ENCODE measurements at regions of chr22 and their contacts with region 1.

Region 1: GRCh38 chr22:35627264-35628041 is 10.3 kb upstream of the MB start:
- H3K4me3 Mint-ChIP-seq: peak overlapping the region; percentile 81
- H3K27ac Mint-ChIP-seq: peak overlapping the region; percentile 75
- H3K4me1 Mint-ChIP-seq: peaks cover 47% of the 10 kb centered on the region
- H3K27me3 Mint-ChIP-seq: peaks cover 24% of the 10 kb centered on the region

Region 2: DNA sequence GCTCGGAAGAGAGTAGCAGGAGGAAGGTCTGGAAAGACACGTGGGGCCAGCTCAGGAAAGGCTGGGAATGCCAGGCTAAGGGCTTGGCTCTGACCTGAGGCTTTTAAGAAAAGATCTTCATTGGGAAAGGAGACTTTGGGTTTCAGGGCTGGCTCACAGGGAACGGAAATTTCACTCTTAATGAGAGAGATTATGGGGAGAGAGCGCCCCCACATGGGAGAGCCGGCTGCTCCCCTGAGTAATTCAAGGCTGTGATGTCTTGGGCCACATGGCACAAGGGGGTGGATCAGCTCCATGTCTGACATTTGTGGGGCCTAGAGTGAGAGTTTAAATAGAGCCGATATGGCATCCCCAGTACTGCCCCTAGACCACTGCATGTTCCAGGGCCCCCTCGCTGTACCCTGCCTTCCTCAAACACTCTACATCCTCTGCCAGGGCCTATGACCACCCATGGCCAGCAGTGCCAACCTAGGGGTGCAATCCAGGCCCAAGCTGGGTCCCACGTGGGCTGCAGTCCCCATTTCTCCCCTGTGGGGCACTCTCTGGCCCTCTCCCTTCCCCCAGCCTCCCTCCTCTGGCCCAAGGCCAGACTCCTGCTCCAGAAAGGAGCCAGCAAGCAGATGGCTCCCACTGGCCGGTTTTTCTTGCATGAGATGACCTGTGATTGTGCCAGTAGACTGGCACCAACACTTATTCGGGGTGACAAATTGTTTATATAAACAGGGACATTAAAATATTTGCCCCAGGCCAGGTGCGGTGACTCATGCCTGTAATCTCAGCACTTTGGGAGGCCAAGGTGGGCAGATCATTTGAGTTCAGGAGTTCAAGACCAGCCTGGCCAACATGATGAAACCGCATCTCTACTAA is 486.3 kb before region 1 on chr22:
- intact Hi-C with region 1: no loop called
- H3K4me3 Mint-ChIP-seq: no peak overlapping the region
- H3K27ac Mint-ChIP-seq: no peak overlapping the region
- H3K4me1 Mint-ChIP-seq: no peaks in the 10 kb centered on the region
- H3K27me3 Mint-ChIP-seq: peaks cover 4% of the 10 kb centered on the region

Region 3: GRCh38 chr22:35430897-35431322 is 196.5 kb before region 1 on chr22:
- intact Hi-C with region 1: loop called (anchors 1 kb)
- H3K4me3 Mint-ChIP-seq: no peak overlapping the region
- H3K27ac Mint-ChIP-seq: no peak overlapping the region
- H3K4me1 Mint-ChIP-seq: no peaks in the 10 kb centered on the region
- H3K27me3 Mint-ChIP-seq: no peaks in the 10 kb centered on the region

Region 4: GRCh38 chr22:35840302-35840739 is 212.9 kb after region 1 on chr22:
- intact Hi-C with region 1: loop called (anchors 10 kb)
- H3K4me3 Mint-ChIP-seq: no peak overlapping the region
- H3K27ac Mint-ChIP-seq: no peak overlapping the region
- H3K4me1 Mint-ChIP-seq: peaks cover 31% of the 10 kb centered on the region
- H3K27me3 Mint-ChIP-seq: peaks cover 9% of the 10 kb centered on the region

Region 5: DNA sequence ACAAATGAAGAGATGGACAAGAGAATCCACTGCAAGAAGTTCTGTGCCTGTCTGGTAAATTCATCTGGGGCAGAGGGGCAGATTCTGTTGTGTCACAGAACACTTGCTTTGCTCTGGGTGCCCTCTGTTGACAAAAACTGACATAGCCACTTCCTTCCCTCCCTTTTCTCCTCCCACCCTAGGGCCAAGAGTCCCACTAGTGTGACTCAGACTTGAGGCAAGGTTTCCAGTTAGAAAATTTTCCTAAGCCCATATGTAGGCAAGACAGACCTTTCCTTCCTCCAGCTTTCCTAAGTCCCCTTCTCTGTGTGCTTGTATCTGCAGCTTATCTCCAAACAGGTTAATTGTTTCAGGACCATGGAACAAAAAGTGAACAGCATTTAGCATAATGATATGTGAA is 294.3 kb after region 1 on chr22:
- intact Hi-C with region 1: loop called (anchors 2 kb)
- H3K4me3 Mint-ChIP-seq: no peak overlapping the region
- H3K27ac Mint-ChIP-seq: no peak overlapping the region
- H3K4me1 Mint-ChIP-seq: no peaks in the 10 kb centered on the region
- H3K27me3 Mint-ChIP-seq: no peaks in the 10 kb centered on the region

Region 6: DNA sequence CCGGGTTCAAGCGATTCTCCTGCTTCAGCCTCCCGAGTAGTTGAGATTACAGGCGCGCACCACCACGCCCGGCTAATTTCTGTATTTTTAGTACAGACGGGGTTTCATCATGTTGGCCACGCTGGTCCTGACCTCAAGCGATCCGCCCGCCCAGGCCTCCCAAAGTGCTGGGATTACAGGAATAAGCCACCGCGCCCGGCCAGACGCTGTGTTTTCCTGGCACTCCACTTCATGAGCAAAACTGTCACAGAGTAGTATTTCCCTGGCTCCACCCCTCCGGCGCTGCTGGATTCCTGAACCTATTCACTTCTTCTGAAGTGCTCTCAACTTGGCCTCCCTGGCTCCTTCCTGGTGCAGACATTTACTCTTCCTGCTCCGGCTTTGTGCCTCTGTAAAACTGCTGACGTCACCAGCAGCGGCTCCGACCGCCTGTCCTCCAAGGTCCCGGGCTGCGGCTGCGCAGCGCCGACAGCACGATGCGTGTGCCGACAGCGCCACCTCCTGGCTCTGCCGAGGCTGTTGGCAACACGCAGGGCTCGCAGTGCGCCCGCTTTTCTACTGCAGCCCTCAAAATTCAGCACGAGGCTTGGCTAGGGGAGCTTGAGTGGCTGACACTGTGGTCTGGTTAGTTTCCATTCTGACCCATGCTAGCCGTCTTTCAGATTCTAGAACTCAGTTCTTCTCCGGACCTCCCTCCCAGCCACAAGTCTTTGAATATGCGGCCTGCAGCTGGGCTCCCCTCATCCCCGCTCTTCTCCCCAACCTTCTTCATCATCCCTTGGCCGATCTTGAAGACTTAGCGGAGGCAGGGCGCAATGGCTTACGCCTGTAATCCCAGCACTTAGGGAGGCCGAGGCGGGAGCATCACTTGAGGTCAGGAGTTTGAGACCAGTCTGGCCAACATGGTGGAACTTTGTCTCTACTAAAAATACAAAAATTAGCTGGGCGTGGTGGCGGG is 496.5 kb after region 1 on chr22:
- intact Hi-C with region 1: loop called (anchors 10 kb)
- H3K4me3 Mint-ChIP-seq: peak overlapping the region; percentile 27
- H3K27ac Mint-ChIP-seq: peak overlapping the region; percentile 84
- H3K4me1 Mint-ChIP-seq: peaks cover 20% of the 10 kb centered on the region
- H3K27me3 Mint-ChIP-seq: peaks cover 23% of the 10 kb centered on the region

Measured in dendritic cell treated with granulocyte-macrophage colony-stimulating factor and Interleukin-4, amounts not matched to agents 40 ng/mL and 50 ng/mL, for 4 days (primary cell).